K562 (cell line): ENCODE measurements at regions of chr22 and their contacts with region 1.

Region 1: DNA sequence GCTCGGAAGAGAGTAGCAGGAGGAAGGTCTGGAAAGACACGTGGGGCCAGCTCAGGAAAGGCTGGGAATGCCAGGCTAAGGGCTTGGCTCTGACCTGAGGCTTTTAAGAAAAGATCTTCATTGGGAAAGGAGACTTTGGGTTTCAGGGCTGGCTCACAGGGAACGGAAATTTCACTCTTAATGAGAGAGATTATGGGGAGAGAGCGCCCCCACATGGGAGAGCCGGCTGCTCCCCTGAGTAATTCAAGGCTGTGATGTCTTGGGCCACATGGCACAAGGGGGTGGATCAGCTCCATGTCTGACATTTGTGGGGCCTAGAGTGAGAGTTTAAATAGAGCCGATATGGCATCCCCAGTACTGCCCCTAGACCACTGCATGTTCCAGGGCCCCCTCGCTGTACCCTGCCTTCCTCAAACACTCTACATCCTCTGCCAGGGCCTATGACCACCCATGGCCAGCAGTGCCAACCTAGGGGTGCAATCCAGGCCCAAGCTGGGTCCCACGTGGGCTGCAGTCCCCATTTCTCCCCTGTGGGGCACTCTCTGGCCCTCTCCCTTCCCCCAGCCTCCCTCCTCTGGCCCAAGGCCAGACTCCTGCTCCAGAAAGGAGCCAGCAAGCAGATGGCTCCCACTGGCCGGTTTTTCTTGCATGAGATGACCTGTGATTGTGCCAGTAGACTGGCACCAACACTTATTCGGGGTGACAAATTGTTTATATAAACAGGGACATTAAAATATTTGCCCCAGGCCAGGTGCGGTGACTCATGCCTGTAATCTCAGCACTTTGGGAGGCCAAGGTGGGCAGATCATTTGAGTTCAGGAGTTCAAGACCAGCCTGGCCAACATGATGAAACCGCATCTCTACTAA is 75.2 kb downstream of the ISX start:
- DNase-seq: peak; percentile 38 to 57 (median 48)
- ATAC-seq: peak; percentile 88
- H3K4me3 ChIP-seq: no peak overlapping the region
- H3K27ac ChIP-seq: no peak overlapping the region
- H3K4me1 ChIP-seq: peaks cover 0 to 3% of the 10 kb centered on the region in 2 experiments; a peak in 2 of 5 replicates
- H3K27me3 ChIP-seq: no peaks in the 10 kb centered on the region
- CTCF ChIP-seq: peak; percentile 58 to 70 (median 63)
- EP300 ChIP-seq: no peak
- POLR2A ChIP-seq: no peak
- RAD21 ChIP-seq: peak in 1 of 2 experiments; percentile 74; a peak in 3 of 4 replicates

Region 2: DNA sequence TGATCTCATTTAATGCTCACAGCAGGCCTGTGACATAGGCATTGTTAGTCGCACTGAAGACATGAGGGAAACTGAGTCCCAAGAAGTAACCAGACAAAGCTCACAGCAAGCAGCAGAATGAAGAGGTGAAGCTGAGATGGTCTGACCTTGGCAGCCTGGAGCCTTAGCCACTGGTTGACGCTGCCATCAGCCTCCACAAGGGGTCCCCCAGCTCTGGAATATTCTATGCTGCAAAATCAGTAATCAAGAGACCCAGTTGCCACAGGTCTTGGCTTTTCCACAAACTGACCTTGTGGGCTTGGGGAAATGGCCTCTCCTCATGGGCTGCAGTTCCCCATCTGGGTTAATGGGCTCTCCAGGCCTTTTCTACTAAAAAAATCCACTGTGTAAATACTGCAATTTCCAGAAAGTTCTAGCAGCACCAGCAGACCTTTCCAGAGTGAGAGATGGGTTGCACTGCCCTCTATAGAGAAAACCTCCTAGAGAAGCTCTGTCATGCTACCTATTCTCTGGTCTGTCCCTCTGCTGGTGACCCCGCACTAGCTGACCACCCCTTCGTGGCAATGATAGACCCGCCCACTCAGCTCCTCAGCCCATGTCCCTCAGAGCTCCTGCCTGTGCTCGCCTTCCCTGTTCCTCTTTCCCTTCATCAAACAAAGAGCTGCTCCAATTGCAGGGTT is 97.7 kb before region 1 on chr22:
- CTCF ChIA-PET with region 1: interaction called, 9 read pairs
- POLR2A ChIA-PET with region 1: no interaction called
- in situ Hi-C with region 1: loop called (anchors 5 kb)
- intact Hi-C with region 1: loop called (anchors 1 kb)
- DNase-seq: peak; percentile 22 to 50 (median 32)
- ATAC-seq: peak; percentile 94
- H3K4me3 ChIP-seq: no peak overlapping the region
- H3K27ac ChIP-seq: no peak overlapping the region
- H3K4me1 ChIP-seq: no peaks in the 10 kb centered on the region
- H3K27me3 ChIP-seq: no peaks in the 10 kb centered on the region; a peak in 1 of 5 replicates
- CTCF ChIP-seq: peak; percentile 39 to 59 (median 50); a peak in 5 of 6 replicates
- EP300 ChIP-seq: no peak
- POLR2A ChIP-seq: no peak
- RAD21 ChIP-seq: peak; percentile 28 to 71; a peak in 3 of 4 replicates